CD4-positive, alpha-beta memory T cell (primary cell): ENCODE measurements at regions of chr3 and their contacts with region 1.

Region 1: DNA sequence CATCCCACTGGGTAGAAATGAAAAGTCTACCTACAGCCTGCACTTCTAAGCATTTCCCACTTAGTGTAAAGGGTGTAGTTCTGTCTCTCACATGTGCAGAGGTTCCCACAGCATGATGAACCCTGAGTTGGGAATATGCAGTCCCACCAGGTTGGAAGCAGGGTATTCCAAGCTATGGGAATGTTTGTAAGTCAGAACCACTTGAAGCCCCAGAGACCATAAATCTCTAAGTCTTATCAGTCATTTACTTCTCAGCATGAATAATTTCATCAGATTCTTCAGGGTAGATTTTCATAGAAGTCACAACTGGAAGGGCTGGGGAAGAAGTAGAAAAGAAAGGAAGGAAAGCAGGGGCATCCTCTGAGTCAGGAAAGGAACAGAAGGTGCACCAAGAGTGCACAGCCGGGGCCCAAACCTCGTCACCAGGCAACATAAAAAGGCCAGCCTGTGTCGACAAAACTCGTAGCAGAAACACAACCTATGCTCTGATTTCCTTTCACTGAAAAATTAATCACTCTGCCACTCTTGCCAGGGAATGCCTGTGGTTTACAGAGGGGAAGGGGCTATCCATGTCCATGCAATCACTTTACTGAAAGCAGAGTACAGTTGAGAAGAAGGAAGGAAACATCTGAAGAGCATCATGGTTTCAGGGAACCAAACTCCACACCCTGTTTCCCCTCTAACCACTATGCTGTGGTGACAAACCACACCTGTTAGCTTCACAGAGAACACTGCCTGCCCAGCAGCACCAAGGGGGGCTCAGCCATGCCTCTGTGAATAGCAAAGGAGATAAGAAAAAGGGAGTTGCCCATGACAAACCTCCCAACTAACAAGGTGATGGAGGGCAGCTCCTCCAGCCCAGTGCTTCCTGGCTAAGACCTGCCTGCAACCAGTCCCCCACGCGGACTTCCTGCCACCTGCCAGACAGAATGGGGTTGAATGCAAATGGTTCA is 40.5 kb downstream of the SH3BP5 start:
- DNase-seq: peak; percentile 78 to 92 (median 80)
- H3K4me3 ChIP-seq: peak overlapping the region; percentile 21 to 42
- H3K4me3 Mint-ChIP-seq: peak overlapping the region; percentile 76 to 85 (median 80)
- H3K27ac ChIP-seq: peak overlapping the region; percentile 70
- H3K27ac Mint-ChIP-seq: peak overlapping the region; percentile 91 to 97 (median 92)
- H3K4me1 ChIP-seq: peaks cover 93% of the 10 kb centered on the region
- H3K4me1 Mint-ChIP-seq: peaks cover 72 to 98% (median 85%) of the 10 kb centered on the region in 4 donors
- H3K27me3 ChIP-seq: no peaks in the 10 kb centered on the region
- H3K27me3 Mint-ChIP-seq: no peaks in the 10 kb centered on the region

Region 2: GRCh38 chr3:15276028-15276724 is 15.7 kb before region 1 on chr3:
- CTCF ChIA-PET with region 1: interaction called, 8 read pairs
- POLR2A ChIA-PET with region 1: interaction called, 32 read pairs
- intact Hi-C with region 1: loop called (anchors 1 kb)
- DNase-seq: peak in 1 of 5 donors; percentile 19
- H3K4me3 ChIP-seq: no peak overlapping the region
- H3K4me3 Mint-ChIP-seq: peak overlapping the region in 3 of 8 donors; percentile 7 to 50 (median 41)
- H3K27ac ChIP-seq: no peak overlapping the region
- H3K27ac Mint-ChIP-seq: peak overlapping the region; percentile 68 to 95 (median 84)
- H3K4me1 ChIP-seq: peaks cover 96% of the 10 kb centered on the region
- H3K4me1 Mint-ChIP-seq: peaks cover 70 to 97% (median 87%) of the 10 kb centered on the region in 4 donors
- H3K27me3 ChIP-seq: no peaks in the 10 kb centered on the region
- H3K27me3 Mint-ChIP-seq: no peaks in the 10 kb centered on the region

Region 3: GRCh38 chr3:15309662-15310335 is 17.9 kb after region 1 on chr3:
- CTCF ChIA-PET with region 1: interaction called, 7 read pairs
- POLR2A ChIA-PET with region 1: interaction called, 14 read pairs
- intact Hi-C with region 1: loop called (anchors 1 kb)
- DNase-seq: no peak
- H3K4me3 ChIP-seq: no peak overlapping the region
- H3K4me3 Mint-ChIP-seq: peak overlapping the region in 7 of 8 donors; percentile 25 to 77 (median 56)
- H3K27ac ChIP-seq: peak overlapping the region; percentile 11
- H3K27ac Mint-ChIP-seq: peak overlapping the region; percentile 63 to 84 (median 80)
- H3K4me1 ChIP-seq: peaks cover 89% of the 10 kb centered on the region
- H3K4me1 Mint-ChIP-seq: peaks cover 55 to 86% (median 69%) of the 10 kb centered on the region in 4 donors
- H3K27me3 ChIP-seq: no peaks in the 10 kb centered on the region
- H3K27me3 Mint-ChIP-seq: no peaks in the 10 kb centered on the region

Region 4: DNA sequence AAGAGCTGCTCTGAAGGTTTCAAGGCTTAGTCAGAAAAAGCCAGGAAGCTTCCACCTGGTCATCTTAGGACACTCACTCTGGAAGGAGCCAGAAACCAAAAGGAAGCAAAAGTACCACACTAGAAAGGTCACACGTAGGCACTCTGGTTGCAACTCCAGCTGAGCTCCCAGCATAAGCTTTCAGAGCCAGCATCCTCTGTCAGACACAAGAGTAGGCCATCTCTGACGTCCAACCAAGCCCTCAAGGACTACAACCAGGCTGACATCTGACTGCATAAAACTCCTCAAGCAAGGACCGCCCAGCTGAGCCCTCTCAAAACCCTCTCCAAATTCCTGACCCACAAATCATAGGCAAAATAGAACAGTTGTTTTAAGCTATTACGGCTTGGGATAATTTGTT is 27.7 kb after region 1 on chr3:
- CTCF ChIA-PET with region 1: interaction called, 5 read pairs
- POLR2A ChIA-PET with region 1: interaction called, 10 read pairs
- intact Hi-C with region 1: no loop called
- DNase-seq: no peak
- H3K4me3 ChIP-seq: no peak overlapping the region
- H3K4me3 Mint-ChIP-seq: peak overlapping the region; percentile 9 to 88 (median 38)
- H3K27ac ChIP-seq: peak overlapping the region; percentile 5
- H3K27ac Mint-ChIP-seq: peak overlapping the region in 4 of 7 donors; percentile 46 to 90 (median 86)
- H3K4me1 ChIP-seq: peaks cover 88% of the 10 kb centered on the region
- H3K4me1 Mint-ChIP-seq: peaks cover 63 to 96% (median 77%) of the 10 kb centered on the region in 4 donors
- H3K27me3 ChIP-seq: no peaks in the 10 kb centered on the region
- H3K27me3 Mint-ChIP-seq: no peaks in the 10 kb centered on the region

Region 5: GRCh38 chr3:15361494-15362212 is 69.8 kb after region 1 on chr3:
- CTCF ChIA-PET with region 1: interaction called, 4 read pairs
- POLR2A ChIA-PET with region 1: interaction called, 3 read pairs
- intact Hi-C with region 1: loop called (anchors 2 kb)
- DNase-seq: peak in 1 of 5 donors; percentile 39
- H3K4me3 ChIP-seq: no peak overlapping the region
- H3K4me3 Mint-ChIP-seq: peak overlapping the region in 7 of 8 donors; percentile 56 to 92 (median 73)
- H3K27ac ChIP-seq: peak overlapping the region; percentile 36
- H3K27ac Mint-ChIP-seq: peak overlapping the region; percentile 86 to 93 (median 89)
- H3K4me1 ChIP-seq: peaks cover 54% of the 10 kb centered on the region
- H3K4me1 Mint-ChIP-seq: peaks cover 28 to 59% (median 37%) of the 10 kb centered on the region in 4 donors
- H3K27me3 ChIP-seq: no peaks in the 10 kb centered on the region
- H3K27me3 Mint-ChIP-seq: no peaks in the 10 kb centered on the region